Stomach (tissue), 19 donors: ENCODE measurements at regions of chr14 and their contacts with region 1.

Region 1: GRCh38 chr14:88492272-88493089 is 62.3 kb downstream of the PTPN21 start:
- DNase-seq: peak; percentile 72 to 91
- H3K4me3 ChIP-seq: no peak overlapping the region
- H3K27ac ChIP-seq: no peak overlapping the region
- H3K4me1 ChIP-seq: peaks cover 0 to 13% (median 5%) of the 10 kb centered on the region in 4 donors
- H3K27me3 ChIP-seq: no peaks in the 10 kb centered on the region
- CTCF ChIP-seq: peak in 6 of 7 experiments; percentile 30 to 96 (median 94)
- EP300 ChIP-seq: no peak
- POLR2A ChIP-seq: no peak

Region 2: GRCh38 chr14:88546621-88547387 is 54.3 kb after region 1 on chr14:
- intact Hi-C with region 1: loop called (anchors 10 kb)
- DNase-seq: peak in 1 of 2 donors; percentile 51
- H3K4me3 ChIP-seq: no peak overlapping the region
- H3K27ac ChIP-seq: peak overlapping the region; percentile 55 to 76 (median 76)
- H3K4me1 ChIP-seq: peaks cover 24 to 83% (median 53%) of the 10 kb centered on the region in 4 donors
- H3K27me3 ChIP-seq: peaks cover 0 to 4% (median 0%) of the 10 kb centered on the region in 3 donors
- CTCF ChIP-seq: no peak
- EP300 ChIP-seq: no peak
- POLR2A ChIP-seq: no peak